HCT116 (cell line): ENCODE measurements at regions of chr10 and their contacts with region 1.

Region 1: DNA sequence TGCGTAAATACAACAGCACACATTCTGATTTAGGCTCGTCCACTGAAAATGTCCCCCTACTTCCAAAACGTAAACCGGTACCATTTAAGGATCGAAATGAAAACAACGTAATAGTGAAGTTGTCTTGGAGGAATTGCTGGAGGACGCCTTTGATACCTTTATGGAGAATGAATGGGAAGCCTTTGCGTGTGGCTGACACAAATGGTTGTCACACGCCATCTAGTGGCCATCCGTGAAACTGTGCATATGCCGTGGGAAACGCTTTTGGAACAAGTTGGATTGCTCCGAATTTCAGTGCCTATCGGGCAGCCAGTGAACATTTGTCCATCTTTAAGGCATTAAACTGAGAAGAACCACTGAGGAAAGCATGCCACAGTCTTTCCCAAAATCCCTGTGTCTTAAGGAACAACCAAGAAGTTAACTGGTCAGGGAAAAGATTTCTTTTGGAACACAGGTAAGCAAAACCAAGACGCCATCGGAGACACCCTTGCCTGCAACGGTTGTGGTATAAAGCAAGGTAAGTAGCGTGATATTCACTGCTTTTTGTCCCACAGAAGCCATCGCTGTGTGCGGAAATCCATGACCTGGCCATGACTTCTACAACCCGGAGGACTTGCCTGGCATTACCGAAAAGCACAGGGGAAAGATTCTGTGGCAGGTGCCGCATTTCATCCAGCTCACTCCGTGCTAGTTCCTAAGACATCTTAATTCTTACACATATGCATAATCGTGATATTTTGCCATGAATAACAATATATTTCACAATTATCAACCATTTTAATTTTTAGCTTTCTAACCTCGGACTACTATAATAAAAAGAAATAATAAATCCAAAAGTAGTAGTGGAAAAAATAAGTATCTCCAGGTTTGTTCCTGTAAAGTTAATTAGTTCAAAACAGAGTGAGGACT is 100.6 kb downstream of the FAM204A start:
- DNase-seq: peak; percentile 81
- ATAC-seq: peak; percentile 88
- H3K4me3 ChIP-seq: no peak overlapping the region
- H3K27ac ChIP-seq: no peak overlapping the region
- H3K4me1 ChIP-seq: no peaks in the 10 kb centered on the region
- H3K27me3 ChIP-seq: peaks cover 81% of the 10 kb centered on the region
- CTCF ChIP-seq: peak; percentile 92 to 99 (median 98)
- POLR2A ChIP-seq: no peak
- RAD21 ChIP-seq: peak; percentile 98

Region 2: GRCh38 chr10:117537436-117537903 is 704.0 kb before region 1 on chr10:
- CTCF ChIA-PET with region 1: interaction called, 5 read pairs
- POLR2A ChIA-PET with region 1: no interaction called
- RAD21 ChIA-PET with region 1: no interaction called
- intact Hi-C with region 1: loop called (anchors 1 kb)
- DNase-seq: no peak
- ATAC-seq: peak; percentile 88
- H3K4me3 ChIP-seq: no peak overlapping the region
- H3K27ac ChIP-seq: no peak overlapping the region
- H3K4me1 ChIP-seq: peaks cover 0 to 6% of the 10 kb centered on the region in 2 experiments; a peak in 1 of 4 replicates
- H3K27me3 ChIP-seq: peaks cover 18% of the 10 kb centered on the region
- CTCF ChIP-seq: peak; percentile 46 to 85 (median 79)
- POLR2A ChIP-seq: no peak
- RAD21 ChIP-seq: peak; percentile 83

Region 3: DNA sequence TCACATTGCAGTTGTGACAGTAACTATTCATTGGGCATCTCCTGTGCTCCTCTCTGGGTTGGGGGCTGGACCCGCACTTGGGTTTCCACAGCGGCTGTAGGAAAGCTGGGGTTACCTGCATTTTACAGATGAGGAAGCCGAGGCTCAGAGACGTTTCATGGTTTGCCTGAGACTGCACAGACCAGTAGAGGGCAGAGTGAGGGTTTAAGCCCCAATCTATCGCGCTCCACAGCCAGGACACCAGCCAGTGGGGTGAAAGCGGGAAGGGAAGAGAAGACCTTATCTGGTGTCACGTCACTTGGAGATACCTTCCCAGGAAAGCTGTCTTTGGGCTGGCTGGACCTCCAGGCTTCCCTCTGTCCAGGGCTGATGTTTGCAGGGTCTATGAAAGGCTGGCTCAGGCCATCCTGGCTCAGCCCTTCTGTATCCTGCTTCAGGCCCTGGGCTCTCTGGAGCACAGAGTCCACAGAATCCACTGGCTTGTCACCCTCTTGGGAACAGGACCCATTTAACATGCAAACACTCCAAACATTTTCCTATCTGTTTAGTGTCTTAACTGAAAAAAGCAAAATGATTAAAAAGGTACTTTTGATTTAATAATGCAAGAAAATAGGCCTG is 531.2 kb before region 1 on chr10:
- CTCF ChIA-PET with region 1: interaction called, 3 read pairs
- POLR2A ChIA-PET with region 1: no interaction called
- RAD21 ChIA-PET with region 1: no interaction called
- intact Hi-C with region 1: loop called (anchors 1 kb)
- DNase-seq: no peak
- ATAC-seq: peak; percentile 92
- H3K4me3 ChIP-seq: no peak overlapping the region
- H3K27ac ChIP-seq: no peak overlapping the region
- H3K4me1 ChIP-seq: no peaks in the 10 kb centered on the region
- H3K27me3 ChIP-seq: peaks cover 10% of the 10 kb centered on the region
- CTCF ChIP-seq: peak; percentile 26 to 63 (median 56); a peak in 5 of 6 replicates
- POLR2A ChIP-seq: no peak
- RAD21 ChIP-seq: peak; percentile 46

Region 4: DNA sequence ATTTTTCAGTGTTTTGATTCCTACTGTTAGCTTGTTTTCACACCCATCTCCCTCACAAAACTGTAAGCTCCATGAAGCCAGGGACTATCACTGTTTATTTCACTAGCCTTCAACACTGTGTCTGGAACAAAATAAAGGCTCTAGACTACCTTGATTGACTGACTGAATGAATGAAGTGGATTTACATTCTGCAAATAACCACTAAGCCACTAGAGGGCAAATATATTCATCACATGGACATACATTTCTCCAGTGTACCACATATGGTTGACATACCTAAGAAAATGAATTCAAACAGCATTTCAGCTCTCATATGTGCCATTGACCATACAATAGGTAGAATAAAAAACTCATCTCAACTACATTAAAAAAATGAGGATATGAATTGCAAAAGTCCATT is 380.7 kb before region 1 on chr10:
- CTCF ChIA-PET with region 1: interaction called, 3 read pairs
- POLR2A ChIA-PET with region 1: no interaction called
- RAD21 ChIA-PET with region 1: no interaction called
- intact Hi-C with region 1: loop called (anchors 2 kb)
- DNase-seq: peak; percentile 44
- ATAC-seq: peak; percentile 89
- H3K4me3 ChIP-seq: no peak overlapping the region
- H3K27ac ChIP-seq: no peak overlapping the region
- H3K4me1 ChIP-seq: no peaks in the 10 kb centered on the region
- H3K27me3 ChIP-seq: peaks cover 50% of the 10 kb centered on the region
- CTCF ChIP-seq: peak; percentile 43 to 76 (median 63)
- POLR2A ChIP-seq: no peak
- RAD21 ChIP-seq: peak; percentile 61

Region 5: GRCh38 chr10:118259288-118259906 is 17.9 kb after region 1 on chr10:
- CTCF ChIA-PET with region 1: interaction called, 24 read pairs
- POLR2A ChIA-PET with region 1: no interaction called
- RAD21 ChIA-PET with region 1: no interaction called
- intact Hi-C with region 1: no loop called
- DNase-seq: peak; percentile 32
- ATAC-seq: peak; percentile 98
- H3K4me3 ChIP-seq: no peak overlapping the region
- H3K27ac ChIP-seq: no peak overlapping the region
- H3K4me1 ChIP-seq: no peaks in the 10 kb centered on the region
- H3K27me3 ChIP-seq: peaks cover 54% of the 10 kb centered on the region
- CTCF ChIP-seq: peak; percentile 61 to 99 (median 92); a peak in 5 of 6 replicates
- POLR2A ChIP-seq: no peak
- RAD21 ChIP-seq: peak; percentile 70

Region 6: DNA sequence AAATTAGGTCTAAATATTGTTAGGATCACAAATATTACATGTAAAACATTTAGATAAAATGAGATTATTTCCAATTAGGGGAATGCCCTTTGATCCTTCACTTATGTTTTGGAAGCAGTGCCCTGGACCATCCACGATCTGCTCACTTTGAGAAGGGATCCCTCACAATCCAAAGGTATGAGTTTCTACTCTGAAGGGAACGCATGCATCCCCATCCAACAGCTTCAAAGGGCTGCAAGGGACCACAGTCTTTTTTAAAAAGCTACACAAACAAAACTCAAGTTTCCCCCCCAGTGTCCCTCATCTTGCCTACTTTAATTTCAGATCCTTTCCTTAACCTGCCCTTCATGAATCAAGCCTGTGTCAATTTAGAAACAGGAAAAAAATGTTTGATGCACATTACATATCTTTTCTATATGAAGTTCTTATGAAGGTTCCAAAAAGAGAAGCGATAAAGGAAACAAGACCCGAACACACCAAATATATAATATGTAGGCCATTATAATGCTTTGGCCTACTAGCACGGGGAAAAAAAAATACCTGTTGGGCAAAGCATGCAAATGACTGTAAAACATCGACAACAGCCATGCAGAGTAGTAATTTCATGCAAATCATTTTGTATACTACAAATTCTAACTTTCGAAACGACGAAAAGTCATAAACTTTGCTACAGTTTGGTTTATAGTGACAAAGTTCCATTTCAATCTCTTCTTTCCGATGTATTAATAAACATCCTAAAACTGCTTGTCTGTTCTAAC is 837.1 kb after region 1 on chr10:
- CTCF ChIA-PET with region 1: no interaction called
- POLR2A ChIA-PET with region 1: no interaction called
- RAD21 ChIA-PET with region 1: no interaction called
- intact Hi-C with region 1: no loop called
- DNase-seq: no peak
- ATAC-seq: no peak
- H3K4me3 ChIP-seq: peak overlapping the region; percentile 83 to 98
- H3K27ac ChIP-seq: no peak overlapping the region
- H3K4me1 ChIP-seq: peaks cover 22 to 40% of the 10 kb centered on the region in 2 experiments
- H3K27me3 ChIP-seq: no peaks in the 10 kb centered on the region
- CTCF ChIP-seq: no peak
- POLR2A ChIP-seq: no peak
- RAD21 ChIP-seq: no peak